Left cardiac atrium (tissue), 4 donors: ENCODE measurements at regions of chr12 and their contacts with region 1.

Region 1: GRCh38 chr12:3432176-3432742 is 58.7 kb upstream of the PRMT8 start:
- DNase-seq: no peak
- ATAC-seq: no peak

Region 2: DNA sequence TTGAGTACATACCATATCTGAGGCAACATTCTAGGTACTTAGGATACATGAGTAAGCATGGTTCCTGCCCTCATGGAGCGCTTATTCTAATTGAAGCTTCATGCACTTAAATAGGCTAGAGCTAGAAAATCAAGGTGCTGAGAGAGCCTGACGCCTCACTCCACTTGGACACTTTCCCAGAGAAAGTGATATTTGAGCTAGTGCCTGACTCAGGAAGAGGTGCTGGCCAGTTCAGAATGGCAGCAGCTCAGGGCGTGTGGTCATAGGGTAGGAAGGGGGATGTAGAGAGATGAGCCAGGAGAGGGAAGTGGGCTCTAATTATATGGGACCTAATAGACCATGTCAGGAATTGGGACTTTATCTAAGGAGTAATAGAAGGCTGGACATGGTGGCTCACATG is 508.2 kb before region 1 on chr12:
- intact Hi-C with region 1: no loop called
- DNase-seq: no peak
- ATAC-seq: peak; percentile 55 to 78

Region 3: DNA sequence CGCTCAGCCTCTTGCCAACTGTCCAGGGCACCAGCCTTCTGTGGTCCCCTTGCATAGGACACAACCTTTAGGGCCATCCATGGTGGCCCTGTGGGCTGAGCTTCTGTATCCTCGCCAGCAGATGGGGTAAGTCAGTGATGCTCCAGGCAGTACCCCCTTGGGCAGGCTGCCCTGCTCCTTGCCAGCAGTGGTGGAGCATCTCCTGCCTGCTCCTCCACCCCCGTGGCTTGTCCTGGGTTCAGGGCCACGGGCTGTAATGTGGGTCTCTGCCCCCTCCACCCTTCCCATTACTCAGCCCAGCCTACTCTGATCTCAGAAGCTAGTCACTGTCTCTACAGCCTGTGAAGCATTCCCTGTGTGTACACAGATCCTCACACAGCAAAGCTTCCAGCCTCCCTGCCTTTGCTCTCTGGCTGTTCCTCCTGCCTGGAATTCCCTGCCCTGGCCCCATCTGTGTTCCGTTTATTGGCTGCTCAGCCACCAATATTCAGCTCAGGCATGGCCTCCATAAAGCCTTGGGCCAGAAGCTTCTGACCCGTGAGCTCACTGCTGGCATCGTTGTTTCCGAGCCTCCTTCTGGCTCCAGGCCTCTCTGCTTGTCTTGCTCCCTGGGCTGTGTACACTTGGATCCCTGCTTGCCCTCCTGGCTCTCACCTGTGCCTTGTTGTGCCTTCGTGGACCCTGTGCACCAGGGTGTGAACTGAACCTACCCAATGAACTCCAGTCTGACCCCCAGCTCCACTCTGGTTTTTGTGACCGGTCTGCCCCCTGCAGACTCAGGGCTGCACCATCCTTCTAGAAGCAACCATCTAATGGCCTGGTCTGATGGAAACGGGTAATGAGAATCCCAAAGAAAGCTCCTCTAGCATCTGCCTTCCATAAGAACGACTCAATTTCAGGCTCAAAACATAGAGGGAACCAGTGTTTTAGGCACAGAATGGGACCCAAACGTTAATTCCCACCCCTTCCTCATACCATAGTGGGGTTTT is 118.3 kb before region 1 on chr12:
- intact Hi-C with region 1: loop called in 1 of 2 experiments (anchors 10 kb)
- DNase-seq: no peak
- ATAC-seq: peak in 1 of 2 donors; percentile 18